Calu3 (cell line): ENCODE measurements at regions of chr6 and their contacts with region 1.

Region 1: DNA sequence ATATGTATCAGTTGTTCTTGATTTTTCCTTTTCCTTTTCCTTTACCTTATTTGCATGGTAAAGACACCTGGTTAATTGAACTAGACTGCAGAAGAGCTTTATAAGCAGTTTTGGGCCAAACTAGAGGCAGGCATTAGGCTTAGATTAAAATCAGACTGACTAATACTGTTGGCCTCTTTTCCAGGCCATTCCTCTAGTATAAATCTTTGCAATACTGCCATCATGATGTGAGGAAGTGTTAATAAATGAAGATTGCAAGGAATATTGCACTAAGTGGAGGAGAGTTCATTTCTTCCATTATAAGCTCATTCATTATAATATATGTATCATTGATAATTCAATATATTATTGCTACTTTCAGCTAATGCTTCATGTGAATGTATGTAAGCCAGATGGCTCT is 163.8 kb downstream of the MMUT start:
- DNase-seq: no peak
- H3K4me3 Mint-ChIP-seq: no peak overlapping the region
- H3K27ac Mint-ChIP-seq: no peak overlapping the region
- H3K4me1 Mint-ChIP-seq: no peaks in the 10 kb centered on the region
- H3K27me3 Mint-ChIP-seq: no peaks in the 10 kb centered on the region
- CTCF ChIP-seq: no peak

Region 2: GRCh38 chr6:51277474-51277873 is 1978.2 kb after region 1 on chr6:
- CTCF ChIA-PET with region 1: no interaction called
- intact Hi-C with region 1: loop called (anchors 5 kb)
- DNase-seq: no peak
- H3K4me3 Mint-ChIP-seq: no peak overlapping the region
- H3K27ac Mint-ChIP-seq: no peak overlapping the region
- H3K4me1 Mint-ChIP-seq: no peaks in the 10 kb centered on the region
- H3K27me3 Mint-ChIP-seq: no peaks in the 10 kb centered on the region
- CTCF ChIP-seq: no peak